ENCODE measurements at regions of chr2 and their contacts with region 1.

Region 1: DNA sequence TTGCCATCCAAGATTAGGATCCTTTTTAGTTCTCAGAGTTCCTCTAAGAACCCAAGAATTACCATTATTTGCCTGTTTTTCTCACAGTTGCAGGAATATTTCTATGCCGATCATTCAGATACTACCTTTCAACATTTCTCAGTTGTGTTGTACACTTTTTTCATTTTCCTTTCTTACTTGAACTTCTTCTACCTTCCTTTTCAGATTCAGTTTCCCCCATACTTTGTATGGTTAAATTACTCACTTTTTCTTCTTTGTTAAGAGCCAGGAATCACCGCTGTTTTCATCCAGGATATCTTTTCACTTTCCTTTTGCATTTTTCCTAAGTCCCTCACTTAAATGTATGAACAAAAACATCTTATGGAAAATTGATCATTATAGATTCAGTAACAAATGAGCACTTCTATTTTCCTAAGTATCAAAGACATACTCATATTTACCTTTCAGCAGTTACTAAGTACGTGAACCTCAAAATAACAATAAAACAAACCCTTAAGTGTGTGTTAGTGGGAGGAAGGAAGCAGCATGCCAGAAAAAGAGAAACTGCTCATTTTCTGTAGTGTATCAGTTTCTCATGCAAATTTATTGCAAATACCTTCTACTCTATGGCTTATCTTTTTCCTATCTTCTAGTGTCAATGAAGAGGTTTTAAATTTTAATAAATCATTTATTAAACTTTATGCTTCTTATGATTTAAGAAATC is 64.3 kb upstream of the STAT1 start:
- DNase-seq: no peak
- H3K4me3 Mint-ChIP-seq: peak overlapping the region; percentile 60
- H3K27ac Mint-ChIP-seq: peak overlapping the region; percentile 89
- H3K4me1 Mint-ChIP-seq: peaks cover 31% of the 10 kb centered on the region
- H3K27me3 Mint-ChIP-seq: no peaks in the 10 kb centered on the region

Region 2: GRCh38 chr2:191015831-191016230 is 62.5 kb before region 1 on chr2:
- intact Hi-C with region 1: no loop called
- DNase-seq: no peak
- H3K4me3 Mint-ChIP-seq: no peak overlapping the region
- H3K27ac Mint-ChIP-seq: peak overlapping the region; percentile 23
- H3K4me1 Mint-ChIP-seq: peaks cover 45% of the 10 kb centered on the region
- H3K27me3 Mint-ChIP-seq: peaks cover 2% of the 10 kb centered on the region

Region 3: DNA sequence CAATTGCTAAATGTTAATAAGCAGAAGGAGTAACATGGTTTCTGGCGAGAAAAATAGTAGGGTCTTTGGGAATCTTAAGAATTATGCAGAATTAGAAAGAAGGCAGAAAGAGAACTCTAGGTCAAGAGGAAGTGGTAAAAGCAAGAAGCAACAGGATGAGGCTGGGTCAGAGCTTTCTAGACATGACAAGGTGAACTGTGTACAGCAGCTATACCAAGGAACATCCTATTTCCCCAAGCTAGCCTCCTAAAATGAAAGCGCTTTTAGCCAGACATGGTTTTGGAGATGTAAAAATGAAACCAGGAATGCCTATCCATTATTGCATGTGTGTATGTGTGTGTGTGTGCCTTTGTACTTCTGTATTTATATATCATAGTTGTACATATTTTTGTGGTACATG is 22.1 kb before region 1 on chr2:
- intact Hi-C with region 1: no loop called
- DNase-seq: no peak
- H3K4me3 Mint-ChIP-seq: no peak overlapping the region
- H3K27ac Mint-ChIP-seq: peak overlapping the region; percentile 60
- H3K4me1 Mint-ChIP-seq: peaks cover 38% of the 10 kb centered on the region
- H3K27me3 Mint-ChIP-seq: no peaks in the 10 kb centered on the region

Region 4: DNA sequence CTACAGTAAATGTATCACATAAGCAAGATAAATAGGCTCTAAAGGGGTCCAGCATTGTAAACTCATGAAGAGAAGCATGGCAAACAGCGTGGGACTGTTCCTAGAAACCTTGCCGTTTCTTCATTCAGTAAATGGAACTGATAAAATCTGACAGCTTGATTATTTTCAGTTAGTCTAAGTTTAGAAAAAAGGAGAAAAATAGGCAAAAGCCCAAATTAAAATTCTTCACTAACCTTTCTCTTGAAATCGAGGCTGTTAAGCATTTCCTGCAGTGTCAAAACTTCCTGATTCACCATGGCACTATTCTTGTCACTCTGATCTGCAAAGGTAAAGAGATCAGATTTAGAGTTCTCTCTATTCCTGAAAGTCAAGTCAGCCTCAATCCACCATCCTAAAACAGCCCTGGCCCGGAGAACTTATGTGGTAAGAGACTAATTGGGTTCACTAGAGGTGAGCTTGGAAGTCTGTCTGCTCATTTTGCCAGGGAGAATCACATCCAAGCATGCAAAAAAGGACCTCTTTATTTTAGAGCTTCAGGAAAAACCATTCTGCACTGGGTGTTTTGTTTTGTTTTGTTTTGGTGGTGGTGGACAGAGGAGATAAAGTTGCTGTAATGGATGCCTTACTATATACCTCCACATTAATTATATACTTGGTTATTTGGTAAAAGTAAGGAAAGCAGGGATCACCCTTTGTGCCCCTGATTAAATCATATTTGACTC is 12.0 kb before region 1 on chr2:
- intact Hi-C with region 1: loop called (anchors 1 kb)
- DNase-seq: no peak
- H3K4me3 Mint-ChIP-seq: peak overlapping the region; percentile 78
- H3K27ac Mint-ChIP-seq: peak overlapping the region; percentile 79
- H3K4me1 Mint-ChIP-seq: peaks cover 90% of the 10 kb centered on the region
- H3K27me3 Mint-ChIP-seq: no peaks in the 10 kb centered on the region

Region 5: GRCh38 chr2:191105082-191105481 is 26.8 kb after region 1 on chr2:
- intact Hi-C with region 1: loop called (anchors 2 kb)
- DNase-seq: no peak
- H3K4me3 Mint-ChIP-seq: no peak overlapping the region
- H3K27ac Mint-ChIP-seq: peak overlapping the region; percentile 13
- H3K4me1 Mint-ChIP-seq: peaks cover 70% of the 10 kb centered on the region
- H3K27me3 Mint-ChIP-seq: no peaks in the 10 kb centered on the region

Region 6: GRCh38 chr2:191128172-191128910 is 50.0 kb after region 1 on chr2:
- intact Hi-C with region 1: loop called (anchors 1 kb)
- DNase-seq: no peak
- H3K4me3 Mint-ChIP-seq: peak overlapping the region; percentile 12
- H3K27ac Mint-ChIP-seq: peak overlapping the region; percentile 50
- H3K4me1 Mint-ChIP-seq: peaks cover 57% of the 10 kb centered on the region
- H3K27me3 Mint-ChIP-seq: no peaks in the 10 kb centered on the region

Region 7: DNA sequence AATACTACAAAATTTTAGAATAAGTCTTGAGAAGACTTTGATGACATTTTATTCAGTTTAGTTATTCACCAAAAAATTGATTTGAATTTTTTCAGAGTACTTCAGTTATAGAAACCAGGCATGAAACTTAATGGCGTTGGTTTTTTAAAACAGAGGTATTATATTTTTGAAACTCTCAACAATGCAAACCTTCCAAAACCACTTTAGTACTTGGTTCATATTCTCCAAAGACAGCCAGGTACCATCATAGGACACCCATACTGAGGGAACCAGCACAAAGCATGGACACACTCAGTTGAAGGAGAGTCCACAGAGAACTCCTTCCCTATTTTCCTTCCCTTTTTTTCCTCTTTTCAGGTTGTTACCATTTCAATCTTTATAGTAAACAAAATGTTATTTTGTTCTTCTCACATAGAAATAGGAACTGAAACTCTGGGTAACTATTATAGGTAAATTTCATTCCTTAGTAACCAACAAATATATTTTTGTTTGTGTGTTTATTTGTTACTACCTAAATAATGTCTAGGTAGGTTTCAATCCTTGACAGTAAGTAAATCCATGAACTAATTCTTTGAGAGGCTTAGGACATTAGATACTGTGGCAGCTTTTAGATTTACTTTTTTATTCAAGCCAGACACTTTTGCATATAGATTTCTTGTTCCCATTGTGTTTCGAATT is 1020.6 kb after region 1 on chr2:
- intact Hi-C with region 1: no loop called
- DNase-seq: no peak
- H3K4me3 Mint-ChIP-seq: no peak overlapping the region
- H3K27ac Mint-ChIP-seq: no peak overlapping the region
- H3K4me1 Mint-ChIP-seq: no peaks in the 10 kb centered on the region
- H3K27me3 Mint-ChIP-seq: no peaks in the 10 kb centered on the region

Measured in activated T-helper 1 cell treated with anti-CD3 and anti-CD28 coated beads, Interleukin-12 subunit alpha, Interleukin-12 subunit beta, Interleukin-2, Interleukin-4 antibody, amounts not matched to agents 30 ng/mL and 10 ng/mL and 1 ng/mL, durations not matched to agents 14 hours and 24 hours and 36 hours (primary cell).